ENCODE measurements at regions of chr4 and their contacts with region 1.

Region 1: GRCh38 chr4:24594891-24595290 is 10.5 kb upstream of the DHX15 start:
- DNase-seq: peak in 1 of 2 experiments; percentile 94
- H3K4me3 ChIP-seq: peak overlapping the region; percentile 19; the same call in 1 of the 2 replicates
- H3K27ac ChIP-seq: peak overlapping the region; percentile 98
- H3K4me1 ChIP-seq: peaks cover 53% of the 10 kb centered on the region
- H3K27me3 ChIP-seq: no peaks in the 10 kb centered on the region
- CTCF ChIP-seq: no peak

Region 2: DNA sequence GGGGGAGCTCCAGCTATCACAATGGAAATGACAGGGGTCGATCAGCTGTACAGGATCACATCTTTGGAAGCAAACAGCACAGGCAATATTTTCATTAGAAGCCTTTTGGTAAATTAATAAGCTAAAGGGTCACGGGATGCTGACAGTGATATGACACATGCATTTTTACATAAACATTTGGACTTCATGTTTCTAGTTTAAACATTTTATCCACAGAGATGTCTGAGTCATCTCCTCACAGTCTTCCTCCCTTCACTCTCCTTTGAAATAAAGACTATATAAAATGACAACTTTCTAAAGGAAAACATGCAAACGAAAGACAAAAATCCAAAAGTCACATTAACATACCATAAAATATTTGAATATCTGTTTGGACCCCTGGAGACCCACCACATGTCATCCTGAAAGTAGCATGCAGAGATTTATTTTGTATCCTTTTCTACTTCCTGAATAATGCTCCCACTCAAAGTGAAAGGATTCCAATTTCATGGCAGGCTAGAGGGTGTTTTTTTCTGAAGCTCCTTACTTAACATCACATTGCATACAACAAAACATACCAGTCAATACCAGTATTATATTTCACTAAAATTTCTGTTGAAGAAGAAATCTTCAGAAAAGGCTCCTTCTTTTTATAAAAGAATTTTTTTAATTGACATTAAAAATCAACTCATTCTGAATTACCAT is 504.9 kb before region 1 on chr4:
- CTCF ChIA-PET with region 1: no interaction called
- POLR2A ChIA-PET with region 1: no interaction called
- intact Hi-C with region 1: no loop called
- DNase-seq: no peak
- H3K4me3 ChIP-seq: no peak overlapping the region
- H3K27ac ChIP-seq: no peak overlapping the region
- H3K4me1 ChIP-seq: no peaks in the 10 kb centered on the region
- H3K27me3 ChIP-seq: no peaks in the 10 kb centered on the region
- CTCF ChIP-seq: no peak

Region 3: DNA sequence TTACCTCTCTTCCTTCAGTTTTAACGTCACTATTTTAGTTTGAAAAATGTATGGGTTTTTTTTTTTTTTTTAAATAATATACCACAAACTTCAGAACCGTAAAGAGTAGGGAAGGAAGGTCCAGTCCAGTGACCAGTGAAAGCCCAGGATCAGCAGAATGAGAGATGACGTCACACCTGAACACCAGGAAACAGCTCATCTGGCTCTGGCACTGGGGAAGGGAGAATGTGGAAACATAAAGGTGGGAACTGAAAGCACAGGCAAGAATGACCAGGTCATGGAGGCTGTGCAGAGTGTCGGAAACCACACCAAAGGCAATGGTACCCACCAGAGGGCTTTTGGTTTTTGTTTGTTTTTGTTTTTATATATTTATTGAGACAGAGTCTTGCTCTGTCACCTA is 151.7 kb before region 1 on chr4:
- CTCF ChIA-PET with region 1: no interaction called
- POLR2A ChIA-PET with region 1: no interaction called
- intact Hi-C with region 1: no loop called
- DNase-seq: no peak
- H3K4me3 ChIP-seq: no peak overlapping the region
- H3K27ac ChIP-seq: no peak overlapping the region
- H3K4me1 ChIP-seq: no peaks in the 10 kb centered on the region
- H3K27me3 ChIP-seq: peaks cover 58% of the 10 kb centered on the region; the same call in 1 of the 2 replicates
- CTCF ChIP-seq: no peak

Region 4: GRCh38 chr4:24607334-24607733 is 12.4 kb after region 1 on chr4:
- CTCF ChIA-PET with region 1: no interaction called
- POLR2A ChIA-PET with region 1: no interaction called
- intact Hi-C with region 1: no loop called
- DNase-seq: no peak
- H3K4me3 ChIP-seq: no peak overlapping the region
- H3K27ac ChIP-seq: no peak overlapping the region
- H3K4me1 ChIP-seq: peaks cover 7% of the 10 kb centered on the region
- H3K27me3 ChIP-seq: no peaks in the 10 kb centered on the region
- CTCF ChIP-seq: no peak

Region 5: GRCh38 chr4:24642981-24643547 is 48.2 kb after region 1 on chr4:
- CTCF ChIA-PET with region 1: no interaction called
- POLR2A ChIA-PET with region 1: interaction called, 11 read pairs
- intact Hi-C with region 1: loop called (anchors 1 kb)
- DNase-seq: peak; percentile 53 to 89
- H3K4me3 ChIP-seq: no peak overlapping the region; the same call in 1 of the 2 replicates
- H3K27ac ChIP-seq: peak overlapping the region; percentile 65
- H3K4me1 ChIP-seq: peaks cover 38% of the 10 kb centered on the region
- H3K27me3 ChIP-seq: no peaks in the 10 kb centered on the region
- CTCF ChIP-seq: no peak

Region 6: GRCh38 chr4:24680766-24681448 is 86.0 kb after region 1 on chr4:
- CTCF ChIA-PET with region 1: interaction called, 14 read pairs
- POLR2A ChIA-PET with region 1: no interaction called
- intact Hi-C with region 1: no loop called
- DNase-seq: no peak
- H3K4me3 ChIP-seq: no peak overlapping the region
- H3K27ac ChIP-seq: no peak overlapping the region
- H3K4me1 ChIP-seq: no peaks in the 10 kb centered on the region; the same call in 1 of the 2 replicates
- H3K27me3 ChIP-seq: no peaks in the 10 kb centered on the region
- CTCF ChIP-seq: no peak

Region 7: DNA sequence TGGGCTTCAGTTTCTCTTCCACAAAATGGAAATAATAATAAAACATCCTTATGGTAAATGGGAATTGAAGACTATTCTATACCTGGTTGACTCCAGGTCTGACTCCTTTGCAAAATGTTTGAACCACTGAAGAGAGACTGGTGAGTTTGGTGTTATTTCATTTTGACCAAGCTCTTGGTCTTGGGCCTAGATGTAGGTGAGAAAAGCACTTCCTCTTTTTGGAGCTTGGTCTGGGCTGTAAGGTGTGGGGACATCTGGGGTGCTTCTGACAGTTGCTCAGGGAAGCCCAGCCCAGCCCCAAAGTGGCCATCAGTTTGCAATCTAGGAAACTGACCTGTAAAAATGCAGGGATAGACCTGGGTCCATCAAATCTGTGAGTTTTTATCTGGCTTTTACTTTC is 173.7 kb after region 1 on chr4:
- CTCF ChIA-PET with region 1: no interaction called
- POLR2A ChIA-PET with region 1: no interaction called
- intact Hi-C with region 1: loop called (anchors 5 kb)
- DNase-seq: no peak
- H3K4me3 ChIP-seq: no peak overlapping the region
- H3K27ac ChIP-seq: no peak overlapping the region
- H3K4me1 ChIP-seq: peaks cover 21% of the 10 kb centered on the region
- H3K27me3 ChIP-seq: no peaks in the 10 kb centered on the region
- CTCF ChIP-seq: no peak

Region 8: GRCh38 chr4:24794916-24795665 is 200.2 kb after region 1 on chr4 and contains the start of gene SOD3:
- CTCF ChIA-PET with region 1: no interaction called
- POLR2A ChIA-PET with region 1: no interaction called
- intact Hi-C with region 1: no loop called
- DNase-seq: peak; percentile 78 to 86
- H3K4me3 ChIP-seq: peak within 1 kb of the TSS; percentile 34; the same call in 1 of the 2 replicates
- H3K27ac ChIP-seq: peak within 1 kb of the TSS; percentile 25; the same call in 1 of the 2 replicates
- H3K4me1 ChIP-seq: peaks cover 12% of the 10 kb centered on the region
- H3K27me3 ChIP-seq: no peaks in the 10 kb centered on the region
- CTCF ChIP-seq: no peak
- total RNA-seq, gene SOD3: 6.3 and 7.6 TPM in 2 replicates